Left colon (tissue), 2 donors: ENCODE measurements at regions of chr13 and their contacts with region 1.

Region 1: DNA sequence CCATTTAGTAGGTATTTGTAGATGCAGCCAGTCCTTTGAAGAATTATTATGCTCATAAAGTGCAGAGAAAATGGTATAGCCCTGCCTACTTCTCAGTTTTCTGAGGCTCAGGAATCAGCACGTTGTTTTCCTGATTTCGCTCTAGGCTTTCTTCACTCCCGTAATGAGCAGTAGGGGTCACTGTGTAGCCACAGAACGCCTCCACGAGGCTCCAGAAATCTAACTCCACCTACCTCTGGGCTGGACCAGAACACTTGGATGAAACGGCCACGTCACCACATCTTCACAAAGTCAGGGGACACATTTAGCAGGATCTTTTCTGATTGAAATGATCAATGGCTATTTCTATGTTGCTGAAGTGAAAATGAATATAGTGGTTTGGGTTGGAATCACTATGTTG is 49.8 kb upstream of the GTF3A start:
- DNase-seq: peak; percentile 75 to 79
- ATAC-seq: peak; percentile 81

Region 2: DNA sequence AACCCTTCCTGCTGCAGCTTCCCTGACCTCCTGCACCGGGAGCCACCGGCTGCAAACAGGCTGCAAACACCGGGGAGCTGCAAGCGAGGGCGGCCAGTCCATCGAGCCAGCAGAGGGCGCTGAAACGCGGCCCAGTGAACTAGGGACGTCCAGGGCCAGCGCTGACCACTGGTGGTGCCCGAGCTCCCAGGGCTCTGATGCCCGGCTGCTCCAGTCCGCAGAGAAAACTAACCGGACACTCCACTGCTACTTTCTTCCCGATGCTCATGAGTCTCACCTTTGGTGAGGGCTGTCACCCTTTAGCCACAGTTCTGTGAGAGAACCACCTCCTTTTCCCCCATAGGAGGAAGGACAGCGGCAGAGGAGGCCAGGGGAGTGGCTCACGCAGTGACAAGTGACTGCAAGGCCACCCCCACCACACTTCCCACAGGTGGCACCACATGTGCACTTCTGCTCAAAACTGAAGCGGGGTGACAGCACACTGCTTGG is 158.5 kb after region 1 on chr13:
- intact Hi-C with region 1: loop called in 1 of 2 experiments (anchors 10 kb)
- DNase-seq: peak; percentile 74 to 91
- ATAC-seq: peak; percentile 92

Region 3: GRCh38 chr13:27889471-27889870 is 514.8 kb after region 1 on chr13:
- intact Hi-C with region 1: no loop called
- DNase-seq: no peak
- ATAC-seq: no peak

Region 4: DNA sequence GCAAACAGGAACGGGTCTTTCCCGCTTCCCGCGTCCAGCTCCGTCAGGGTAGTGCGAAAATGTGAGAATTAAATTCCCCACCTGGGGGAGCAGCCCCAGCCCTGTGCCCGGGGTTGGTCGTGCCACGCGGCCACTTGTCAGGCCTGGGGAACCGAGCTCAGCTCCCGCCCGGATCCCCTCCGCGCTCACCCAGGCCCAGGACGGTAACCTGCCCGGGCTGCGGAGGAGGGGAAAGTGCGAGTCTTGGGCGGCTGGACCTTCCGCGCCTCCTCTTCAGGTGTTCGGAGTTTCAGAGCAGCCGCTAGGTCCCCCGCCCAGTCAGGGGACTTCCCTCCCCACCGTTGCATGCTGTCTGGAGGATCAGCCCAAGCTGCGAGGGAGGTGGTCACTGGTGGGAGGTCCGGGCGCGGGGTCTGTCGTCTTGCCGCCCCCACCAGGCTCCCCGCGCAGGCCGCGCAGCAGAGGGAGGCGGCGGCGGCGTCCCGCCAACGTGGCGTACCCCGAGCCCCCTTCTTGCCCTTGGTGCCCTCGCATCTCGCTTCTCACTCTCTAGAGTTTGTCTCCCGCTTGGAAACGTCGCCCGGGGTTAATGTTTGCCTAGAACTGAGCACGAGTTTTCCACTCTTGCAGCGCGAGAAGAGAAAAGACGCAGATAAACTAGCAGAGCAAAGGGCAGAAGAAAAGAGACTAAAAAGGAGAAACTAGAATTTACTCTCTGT is 605.8 kb after region 1 on chr13:
- intact Hi-C with region 1: loop called in 1 of 2 experiments (anchors 10 kb)
- DNase-seq: peak in 1 of 2 donors; percentile 68
- ATAC-seq: peak; percentile 28